Posterior cingulate gyrus (tissue), 11 donors: ENCODE measurements at regions of chr4 and their contacts with region 1.

Region 1: DNA sequence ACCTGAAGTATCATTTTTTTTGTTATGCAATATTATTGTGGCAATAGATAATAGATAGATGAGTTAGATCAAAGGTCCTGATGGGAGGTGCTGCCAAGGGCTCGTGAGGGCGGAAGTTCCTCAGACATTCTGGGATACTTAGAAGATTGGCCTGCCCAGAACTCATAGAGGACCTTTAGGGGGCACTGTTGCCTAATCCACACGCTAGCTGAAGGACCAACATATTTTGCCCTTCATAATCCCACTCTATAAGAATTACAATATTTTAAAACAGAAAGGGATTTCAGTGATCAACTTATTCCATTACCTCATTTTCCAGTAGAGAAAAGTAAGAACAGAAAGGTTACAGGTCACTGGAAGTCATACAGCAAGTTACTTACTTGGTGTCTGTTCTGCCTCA is 22.9 kb upstream of the COX7B2 start:
- DNase-seq: peak in 6 of 10 donors; percentile 39 to 82 (median 50)

Region 2: GRCh38 chr4:47122592-47123291 is 190.8 kb after region 1 on chr4:
- intact Hi-C with region 1: loop called (anchors 5 kb)
- DNase-seq: peak in 8 of 10 donors; percentile 14 to 84 (median 52)

Region 3: DNA sequence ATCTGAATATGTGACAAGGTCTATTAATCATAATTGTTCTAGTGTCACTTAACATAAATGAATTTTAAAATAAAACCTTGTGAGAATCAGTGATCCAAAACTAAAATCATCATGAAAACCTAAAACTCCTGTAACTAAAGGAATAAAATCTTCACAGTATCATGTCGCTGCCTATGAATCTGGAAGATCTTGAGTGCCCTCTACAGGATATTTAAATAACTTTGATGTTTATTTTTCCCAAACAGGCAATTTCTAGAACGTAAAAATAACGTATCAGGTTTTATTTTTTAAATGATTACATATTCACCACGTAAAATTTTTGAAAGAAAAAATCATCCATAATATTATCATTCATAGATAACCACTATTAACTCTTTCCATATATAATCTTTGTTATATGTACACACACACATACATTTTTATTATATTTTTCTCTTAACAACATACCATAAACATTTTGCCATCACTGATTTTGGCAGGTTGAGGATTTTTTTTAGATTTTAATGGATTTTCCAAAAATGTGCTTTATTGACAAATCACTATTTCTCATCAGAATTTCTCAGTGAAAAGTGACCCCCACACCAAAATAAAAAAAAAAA is 451.9 kb after region 1 on chr4:
- intact Hi-C with region 1: loop called (anchors 5 kb)
- DNase-seq: no peak